Pancreas (tissue), 10 donors: ENCODE measurements at regions of chr14 and their contacts with region 1.

Region 1: GRCh38 chr14:61461808-61462275 is 140.5 kb downstream of the PRKCH start:
- DNase-seq: peak in 1 of 6 donors; percentile 40
- ATAC-seq: peak; percentile 79 to 95 (median 88)
- H3K4me3 ChIP-seq: no peak overlapping the region
- H3K27ac ChIP-seq: no peak overlapping the region
- H3K4me1 ChIP-seq: no peaks in the 10 kb centered on the region
- H3K27me3 ChIP-seq: no peaks in the 10 kb centered on the region
- CTCF ChIP-seq: peak; percentile 69 to 78 (median 74)

Region 2: GRCh38 chr14:61736751-61737150 is 274.9 kb after region 1 on chr14:
- intact Hi-C with region 1: loop called in 1 of 3 experiments (anchors 5 kb)
- DNase-seq: no peak
- ATAC-seq: no peak
- H3K4me3 ChIP-seq: no peak overlapping the region
- H3K27ac ChIP-seq: no peak overlapping the region
- H3K4me1 ChIP-seq: no peaks in the 10 kb centered on the region
- H3K27me3 ChIP-seq: no peaks in the 10 kb centered on the region
- CTCF ChIP-seq: no peak

Region 3: GRCh38 chr14:61837336-61838229 is 375.7 kb after region 1 on chr14:
- intact Hi-C with region 1: loop called (anchors 2 to 10 kb)
- DNase-seq: peak; percentile 57 to 84 (median 77)
- ATAC-seq: peak; percentile 98 to 100 (median 98)
- H3K4me3 ChIP-seq: no peak overlapping the region
- H3K27ac ChIP-seq: no peak overlapping the region
- H3K4me1 ChIP-seq: no peaks in the 10 kb centered on the region
- H3K27me3 ChIP-seq: no peaks in the 10 kb centered on the region
- CTCF ChIP-seq: peak; percentile 82 to 95 (median 86)